CD8-positive, alpha-beta T cell (primary cell): ENCODE measurements at regions of chr3 and their contacts with region 1.

Region 1: GRCh38 chr3:27484015-27484844 is at the start of gene SLC4A7:
- DNase-seq: peak; percentile 96 to 100 (median 99)
- ATAC-seq: peak; percentile 89
- H3K4me3 ChIP-seq: peak within 1 kb of the TSS; percentile 69 to 91
- H3K4me3 Mint-ChIP-seq: peak within 1 kb of the TSS; percentile 100
- H3K27ac ChIP-seq: peak within 1 kb of the TSS; percentile 75 to 84
- H3K27ac Mint-ChIP-seq: peak within 1 kb of the TSS; percentile 97
- H3K4me1 ChIP-seq: peaks cover 33% of the 10 kb centered on the region
- H3K4me1 Mint-ChIP-seq: peaks cover 41% of the 10 kb centered on the region
- H3K27me3 ChIP-seq: no peaks in the 10 kb centered on the region
- H3K27me3 Mint-ChIP-seq: no peaks in the 10 kb centered on the region
- CTCF ChIP-seq: no peak
- total RNA-seq, gene SLC4A7: 19.4 to 19.6 TPM

Region 2: GRCh38 chr3:25782938-25783660 is 1701.1 kb before region 1 on chr3 and contains the start of gene NGLY1:
- CTCF ChIA-PET with region 1: no interaction called
- POLR2A ChIA-PET with region 1: no interaction called
- intact Hi-C with region 1: loop called (anchors 5 kb)
- DNase-seq: peak; percentile 72 to 91 (median 84)
- ATAC-seq: peak; percentile 90
- H3K4me3 ChIP-seq: peak within 1 kb of the TSS; percentile 94 to 97
- H3K4me3 Mint-ChIP-seq: peak within 1 kb of the TSS; percentile 94
- H3K27ac ChIP-seq: peak within 1 kb of the TSS; percentile 84 to 85
- H3K27ac Mint-ChIP-seq: peak within 1 kb of the TSS; percentile 93
- H3K4me1 ChIP-seq: peaks cover 30% of the 10 kb centered on the region
- H3K4me1 Mint-ChIP-seq: peaks cover 52% of the 10 kb centered on the region
- H3K27me3 ChIP-seq: no peaks in the 10 kb centered on the region
- H3K27me3 Mint-ChIP-seq: no peaks in the 10 kb centered on the region
- CTCF ChIP-seq: no peak
- total RNA-seq, gene NGLY1: 51.4 to 57.0 TPM

Region 3: GRCh38 chr3:27134165-27134796 is 349.9 kb before region 1 on chr3:
- CTCF ChIA-PET with region 1: no interaction called
- POLR2A ChIA-PET with region 1: no interaction called
- intact Hi-C with region 1: loop called in 1 of 2 experiments (anchors 5 kb)
- DNase-seq: peak; percentile 5 to 77 (median 61)
- ATAC-seq: peak; percentile 78
- H3K4me3 ChIP-seq: no peak overlapping the region
- H3K4me3 Mint-ChIP-seq: no peak overlapping the region
- H3K27ac ChIP-seq: no peak overlapping the region
- H3K27ac Mint-ChIP-seq: no peak overlapping the region
- H3K4me1 ChIP-seq: no peaks in the 10 kb centered on the region
- H3K4me1 Mint-ChIP-seq: no peaks in the 10 kb centered on the region
- H3K27me3 ChIP-seq: no peaks in the 10 kb centered on the region
- H3K27me3 Mint-ChIP-seq: peaks cover 2% of the 10 kb centered on the region
- CTCF ChIP-seq: peak; percentile 91

Region 4: GRCh38 chr3:27166888-27167287 is 317.3 kb before region 1 on chr3:
- CTCF ChIA-PET with region 1: no interaction called
- POLR2A ChIA-PET with region 1: no interaction called
- intact Hi-C with region 1: no loop called
- DNase-seq: no peak
- ATAC-seq: no peak
- H3K4me3 ChIP-seq: no peak overlapping the region
- H3K4me3 Mint-ChIP-seq: no peak overlapping the region
- H3K27ac ChIP-seq: no peak overlapping the region
- H3K27ac Mint-ChIP-seq: no peak overlapping the region
- H3K4me1 ChIP-seq: no peaks in the 10 kb centered on the region
- H3K4me1 Mint-ChIP-seq: no peaks in the 10 kb centered on the region
- H3K27me3 ChIP-seq: no peaks in the 10 kb centered on the region
- H3K27me3 Mint-ChIP-seq: no peaks in the 10 kb centered on the region
- CTCF ChIP-seq: no peak

Region 5: GRCh38 chr3:27467545-27467944 is 16.7 kb before region 1 on chr3:
- CTCF ChIA-PET with region 1: interaction called, 10 read pairs
- POLR2A ChIA-PET with region 1: interaction called, 5 read pairs
- intact Hi-C with region 1: loop called in 1 of 2 experiments (anchors 1 kb)
- DNase-seq: peak in 2 of 9 experiments; percentile 54 to 69
- ATAC-seq: peak; percentile 91
- H3K4me3 ChIP-seq: no peak overlapping the region
- H3K4me3 Mint-ChIP-seq: no peak overlapping the region
- H3K27ac ChIP-seq: no peak overlapping the region
- H3K27ac Mint-ChIP-seq: peak overlapping the region; percentile 28
- H3K4me1 ChIP-seq: peaks cover 3% of the 10 kb centered on the region
- H3K4me1 Mint-ChIP-seq: peaks cover 28% of the 10 kb centered on the region
- H3K27me3 ChIP-seq: no peaks in the 10 kb centered on the region
- H3K27me3 Mint-ChIP-seq: no peaks in the 10 kb centered on the region
- CTCF ChIP-seq: peak; percentile 60

Region 6: DNA sequence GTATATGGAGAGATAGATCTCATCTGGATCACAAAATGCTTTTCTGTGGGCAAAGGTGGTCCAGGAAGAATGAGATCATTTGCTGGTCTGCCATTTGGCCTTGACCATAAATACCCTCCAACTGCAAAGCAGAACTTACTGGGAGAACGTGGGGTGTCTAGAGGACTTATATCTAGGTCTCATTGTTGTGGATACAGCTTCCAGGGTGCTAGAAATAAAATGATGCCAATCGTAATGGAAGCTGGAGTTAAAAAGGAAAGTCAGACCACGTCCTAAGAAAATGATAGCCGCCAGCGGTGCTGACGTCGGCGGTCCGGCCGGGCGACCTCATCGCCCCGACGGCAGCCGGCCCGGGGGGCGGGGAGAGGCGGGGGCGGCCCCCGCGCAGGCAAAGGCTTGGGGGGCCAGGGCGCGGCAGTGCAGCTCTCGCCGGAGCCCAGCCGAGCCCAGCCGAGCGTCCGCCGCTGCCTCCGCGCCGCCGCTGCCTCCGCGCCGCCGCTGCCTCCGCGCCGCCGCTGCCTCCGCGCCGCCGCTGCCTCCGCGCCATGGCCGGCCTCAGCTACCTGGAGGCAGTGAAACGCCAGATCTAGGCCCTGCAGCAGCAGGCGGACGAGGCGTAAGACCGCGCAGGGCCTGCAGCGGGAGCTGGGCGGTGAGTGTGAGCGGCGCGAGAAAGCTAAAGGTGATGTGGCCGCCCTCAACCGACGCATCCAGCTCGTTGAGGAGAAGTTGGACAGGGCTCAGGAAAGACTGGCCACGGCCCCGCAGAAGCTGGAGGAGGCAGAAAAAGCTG is 148.4 kb after region 1 on chr3:
- CTCF ChIA-PET with region 1: no interaction called
- POLR2A ChIA-PET with region 1: interaction called, 11 read pairs
- intact Hi-C with region 1: loop called (anchors 5 to 10 kb)
- DNase-seq: peak; percentile 12 to 75 (median 47)
- ATAC-seq: peak; percentile 81
- H3K4me3 ChIP-seq: peak overlapping the region; percentile 65 to 71
- H3K4me3 Mint-ChIP-seq: peak overlapping the region; percentile 95
- H3K27ac ChIP-seq: peak overlapping the region; percentile 54 to 73
- H3K27ac Mint-ChIP-seq: peak overlapping the region; percentile 92
- H3K4me1 ChIP-seq: peaks cover 20% of the 10 kb centered on the region
- H3K4me1 Mint-ChIP-seq: peaks cover 27% of the 10 kb centered on the region
- H3K27me3 ChIP-seq: no peaks in the 10 kb centered on the region
- H3K27me3 Mint-ChIP-seq: no peaks in the 10 kb centered on the region
- CTCF ChIP-seq: no peak

Region 7: GRCh38 chr3:28241221-28242160 is 757.3 kb after region 1 on chr3 and contains the start of gene CMC1:
- CTCF ChIA-PET with region 1: no interaction called
- POLR2A ChIA-PET with region 1: no interaction called
- intact Hi-C with region 1: loop called in 1 of 2 experiments (anchors 5 kb)
- DNase-seq: peak; percentile 68 to 94 (median 90)
- ATAC-seq: peak; percentile 90
- H3K4me3 ChIP-seq: peak within 1 kb of the TSS; percentile 76 to 89
- H3K4me3 Mint-ChIP-seq: peak within 1 kb of the TSS; percentile 95
- H3K27ac ChIP-seq: peak within 1 kb of the TSS; percentile 53 to 77
- H3K27ac Mint-ChIP-seq: peak within 1 kb of the TSS; percentile 92
- H3K4me1 ChIP-seq: peaks cover 29% of the 10 kb centered on the region
- H3K4me1 Mint-ChIP-seq: peaks cover 50% of the 10 kb centered on the region
- H3K27me3 ChIP-seq: no peaks in the 10 kb centered on the region
- H3K27me3 Mint-ChIP-seq: no peaks in the 10 kb centered on the region
- CTCF ChIP-seq: no peak
- total RNA-seq, gene CMC1: 28.0 to 31.0 TPM

Region 8: GRCh38 chr3:28348629-28349483 is 864.6 kb after region 1 on chr3 and contains the starts of genes AZI2 and ZCWPW2:
- CTCF ChIA-PET with region 1: no interaction called
- POLR2A ChIA-PET with region 1: interaction called, 10 read pairs
- intact Hi-C with region 1: loop called (anchors 1 kb)
- DNase-seq: peak; percentile 84 to 96 (median 91)
- ATAC-seq: peak; percentile 89
- H3K4me3 ChIP-seq: peak within 1 kb of the TSS; percentile 96 to 97
- H3K4me3 Mint-ChIP-seq: peak within 1 kb of the TSS; percentile 98
- H3K27ac ChIP-seq: peak within 1 kb of the TSS; percentile 95 to 99
- H3K27ac Mint-ChIP-seq: peak within 1 kb of the TSS; percentile 95
- H3K4me1 ChIP-seq: peaks cover 35% of the 10 kb centered on the region
- H3K4me1 Mint-ChIP-seq: peaks cover 60% of the 10 kb centered on the region
- H3K27me3 ChIP-seq: no peaks in the 10 kb centered on the region
- H3K27me3 Mint-ChIP-seq: no peaks in the 10 kb centered on the region
- CTCF ChIP-seq: no peak
- total RNA-seq, gene AZI2: 27.2 to 29.2 TPM
- total RNA-seq, gene ZCWPW2: 0.54 TPM in 1 of 2 experiments, not detected in the other

Region 9: GRCh38 chr3:29412110-29412509 is 1927.9 kb after region 1 on chr3:
- CTCF ChIA-PET with region 1: no interaction called
- POLR2A ChIA-PET with region 1: no interaction called
- intact Hi-C with region 1: no loop called
- DNase-seq: no peak
- ATAC-seq: no peak
- H3K4me3 ChIP-seq: no peak overlapping the region
- H3K4me3 Mint-ChIP-seq: no peak overlapping the region
- H3K27ac ChIP-seq: no peak overlapping the region
- H3K27ac Mint-ChIP-seq: no peak overlapping the region
- H3K4me1 ChIP-seq: no peaks in the 10 kb centered on the region
- H3K4me1 Mint-ChIP-seq: no peaks in the 10 kb centered on the region
- H3K27me3 ChIP-seq: no peaks in the 10 kb centered on the region
- H3K27me3 Mint-ChIP-seq: no peaks in the 10 kb centered on the region
- CTCF ChIP-seq: no peak